Natural killer cell (primary cell): ENCODE measurements at regions of chrX and their contacts with region 1.

Region 1: GRCh38 chrX:50579955-50580354 is 109.3 kb upstream of the DGKK start:
- DNase-seq: peak; percentile 15 to 65
- ATAC-seq: peak in 2 of 3 donors; percentile 62 to 77
- H3K4me3 ChIP-seq: no peak overlapping the region
- H3K4me3 Mint-ChIP-seq: no peak overlapping the region
- H3K27ac ChIP-seq: no peak overlapping the region
- H3K27ac Mint-ChIP-seq: no peak overlapping the region
- H3K4me1 ChIP-seq: no peaks in the 10 kb centered on the region
- H3K4me1 Mint-ChIP-seq: peaks cover 0 to 5% of the 10 kb centered on the region in 2 donors
- H3K27me3 ChIP-seq: no peaks in the 10 kb centered on the region
- H3K27me3 Mint-ChIP-seq: peaks cover 6 to 11% of the 10 kb centered on the region in 2 donors
- CTCF ChIP-seq: peak; percentile 54

Region 2: GRCh38 chrX:49915361-49916222 is 664.4 kb before region 1 on chrX:
- intact Hi-C with region 1: loop called (anchors 1 kb)
- DNase-seq: peak; percentile 17 to 78
- ATAC-seq: peak; percentile 71 to 85 (median 78)
- H3K4me3 ChIP-seq: no peak overlapping the region
- H3K4me3 Mint-ChIP-seq: no peak overlapping the region
- H3K27ac ChIP-seq: no peak overlapping the region
- H3K27ac Mint-ChIP-seq: no peak overlapping the region
- H3K4me1 ChIP-seq: no peaks in the 10 kb centered on the region
- H3K4me1 Mint-ChIP-seq: no peaks in the 10 kb centered on the region
- H3K27me3 ChIP-seq: no peaks in the 10 kb centered on the region
- H3K27me3 Mint-ChIP-seq: no peaks in the 10 kb centered on the region
- CTCF ChIP-seq: peak; percentile 63

Region 3: GRCh38 chrX:50100188-50100587 is 479.8 kb before region 1 on chrX:
- intact Hi-C with region 1: loop called (anchors 1 kb)
- DNase-seq: peak in 1 of 2 donors; percentile 20
- ATAC-seq: peak in 2 of 3 donors; percentile 40 to 62
- H3K4me3 ChIP-seq: no peak overlapping the region
- H3K4me3 Mint-ChIP-seq: no peak overlapping the region
- H3K27ac ChIP-seq: no peak overlapping the region
- H3K27ac Mint-ChIP-seq: no peak overlapping the region
- H3K4me1 ChIP-seq: no peaks in the 10 kb centered on the region
- H3K4me1 Mint-ChIP-seq: peaks cover 0 to 13% of the 10 kb centered on the region in 2 donors
- H3K27me3 ChIP-seq: no peaks in the 10 kb centered on the region
- H3K27me3 Mint-ChIP-seq: peaks cover 0 to 20% of the 10 kb centered on the region in 2 donors
- CTCF ChIP-seq: peak; percentile 23

Region 4: GRCh38 chrX:50333308-50333707 is 246.6 kb before region 1 on chrX:
- intact Hi-C with region 1: loop called (anchors 2 kb)
- DNase-seq: no peak
- ATAC-seq: no peak
- H3K4me3 ChIP-seq: no peak overlapping the region
- H3K4me3 Mint-ChIP-seq: no peak overlapping the region
- H3K27ac ChIP-seq: no peak overlapping the region
- H3K27ac Mint-ChIP-seq: no peak overlapping the region
- H3K4me1 ChIP-seq: no peaks in the 10 kb centered on the region
- H3K4me1 Mint-ChIP-seq: peaks cover 0 to 8% of the 10 kb centered on the region in 2 donors
- H3K27me3 ChIP-seq: no peaks in the 10 kb centered on the region
- H3K27me3 Mint-ChIP-seq: peaks cover 0 to 5% of the 10 kb centered on the region in 2 donors
- CTCF ChIP-seq: no peak